ENCODE measurements at regions of chr7 and their contacts with region 1.

Region 1: DNA sequence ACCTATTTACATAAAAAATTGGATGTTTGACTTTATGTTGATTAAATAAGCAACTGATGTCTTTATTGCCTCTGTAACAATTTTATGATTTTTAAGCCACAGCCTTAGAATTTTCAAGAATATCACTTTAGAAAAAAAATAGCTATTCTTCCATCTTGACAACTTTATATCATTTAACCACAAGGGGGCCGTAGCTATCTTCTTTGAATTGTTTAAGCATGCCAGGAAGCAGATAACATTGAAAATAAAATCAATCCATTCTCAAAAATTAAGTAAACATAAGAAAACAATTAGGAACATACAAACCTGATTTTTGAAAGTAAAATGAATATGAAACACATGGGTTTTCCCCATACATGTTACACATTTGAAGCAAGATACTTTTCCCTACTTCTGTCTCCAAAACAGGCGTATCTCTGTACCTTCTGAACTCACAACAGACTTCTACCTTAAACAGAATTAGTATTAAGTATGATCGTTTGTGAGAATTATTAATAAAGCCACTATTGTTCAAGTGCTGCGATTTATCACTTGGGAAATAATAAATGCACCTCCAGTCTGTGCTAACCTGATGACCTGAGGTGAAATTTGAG is 209.0 kb downstream of the CACNA2D1 start:
- DNase-seq: no peak
- H3K4me3 ChIP-seq: no peak overlapping the region
- H3K27ac ChIP-seq: no peak overlapping the region
- H3K4me1 ChIP-seq: no peaks in the 10 kb centered on the region
- H3K27me3 ChIP-seq: no peaks in the 10 kb centered on the region
- CTCF ChIP-seq: peak; percentile 60 to 64

Region 2: DNA sequence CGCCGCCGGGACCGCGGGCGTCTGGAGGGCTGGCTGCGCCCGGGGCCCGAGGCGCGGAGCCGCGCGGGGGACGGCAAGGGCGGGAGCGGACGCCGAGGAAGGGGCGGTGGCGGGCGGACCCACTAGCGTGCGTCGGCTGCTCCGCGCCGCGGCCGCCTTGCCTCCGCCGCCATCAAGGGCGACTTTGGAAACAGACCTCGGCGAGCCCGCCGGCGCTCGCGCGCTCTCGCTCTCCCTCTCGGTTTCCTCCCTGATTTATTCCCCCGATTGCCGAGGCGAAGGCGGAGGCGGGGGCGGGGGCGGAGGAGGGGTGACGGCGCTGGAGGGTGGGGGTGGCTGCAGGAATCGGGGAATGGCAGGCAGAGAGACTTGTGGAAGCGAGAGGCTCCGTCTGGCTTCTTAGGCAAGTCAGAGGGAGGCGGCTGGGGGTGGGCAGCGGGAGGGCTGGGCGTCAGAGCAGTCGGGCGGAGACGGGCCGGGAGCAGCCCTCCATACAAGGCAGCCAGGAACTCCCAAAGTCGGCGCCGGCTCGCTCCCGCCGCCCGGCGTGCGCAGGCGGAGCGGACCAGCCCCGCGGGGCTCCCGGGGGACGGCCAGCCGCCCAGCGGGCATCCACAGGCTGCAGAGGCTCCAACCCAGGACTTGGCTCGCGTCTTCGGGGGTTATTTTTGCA is 209.1 kb after region 1 on chr7 and contains the start of gene CACNA2D1:
- CTCF ChIA-PET with region 1: no interaction called
- dilution Hi-C with region 1: no loop called
- in situ Hi-C with region 1: no loop called
- intact Hi-C with region 1: loop called (anchors 2 kb)
- DNase-seq: peak; percentile 55
- H3K4me3 ChIP-seq: peak within 1 kb of the TSS; percentile 66 to 75 (median 67)
- H3K27ac ChIP-seq: no peak within 1 kb of the TSS
- H3K4me1 ChIP-seq: peaks cover 11% of the 10 kb centered on the region
- H3K27me3 ChIP-seq: peaks cover 11% of the 10 kb centered on the region
- CTCF ChIP-seq: no peak
- total RNA-seq, gene CACNA2D1: 7.0 to 24.0 TPM

Region 3: GRCh38 chr7:82481499-82482097 is 247.0 kb after region 1 on chr7:
- CTCF ChIA-PET with region 1: no interaction called
- dilution Hi-C with region 1: no loop called
- in situ Hi-C with region 1: no loop called
- intact Hi-C with region 1: loop called (anchors 1 kb)
- DNase-seq: peak; percentile 9
- H3K4me3 ChIP-seq: no peak overlapping the region
- H3K27ac ChIP-seq: no peak overlapping the region
- H3K4me1 ChIP-seq: no peaks in the 10 kb centered on the region
- H3K27me3 ChIP-seq: no peaks in the 10 kb centered on the region
- CTCF ChIP-seq: peak; percentile 71 to 72

Region 4: GRCh38 chr7:82572195-82572880 is 337.8 kb after region 1 on chr7:
- CTCF ChIA-PET with region 1: interaction called, 5 read pairs
- dilution Hi-C with region 1: no loop called
- in situ Hi-C with region 1: loop called in 1 of 2 experiments (anchors 25 kb)
- intact Hi-C with region 1: loop called (anchors 1 kb)
- DNase-seq: peak; percentile 60
- H3K4me3 ChIP-seq: no peak overlapping the region
- H3K27ac ChIP-seq: no peak overlapping the region
- H3K4me1 ChIP-seq: no peaks in the 10 kb centered on the region
- H3K27me3 ChIP-seq: no peaks in the 10 kb centered on the region
- CTCF ChIP-seq: peak; percentile 85 to 95

Measured in mammary epithelial cell (primary cell).